Caco-2 (cell line): ENCODE measurements at regions of chr10 and their contacts with region 1.

Region 1: GRCh38 chr10:43420369-43421200 is 11.6 kb upstream of the HNRNPF start:
- DNase-seq: peak; percentile 97 to 98
- H3K4me3 ChIP-seq: peak overlapping the region; percentile 68
- H3K4me3 Mint-ChIP-seq: peak overlapping the region; percentile 96
- H3K27ac Mint-ChIP-seq: peak overlapping the region; percentile 99
- H3K4me1 ChIP-seq: peaks cover 9% of the 10 kb centered on the region; the same call in 1 of the 2 replicates
- H3K4me1 Mint-ChIP-seq: peaks cover 17% of the 10 kb centered on the region
- H3K27me3 ChIP-seq: no peaks in the 10 kb centered on the region
- H3K27me3 Mint-ChIP-seq: no peaks in the 10 kb centered on the region
- CTCF ChIP-seq: peak in 1 of 2 experiments; percentile 33

Region 2: GRCh38 chr10:43436400-43437140 is 16.0 kb after region 1 on chr10 and contains the start of gene ZNF487:
- CTCF ChIA-PET with region 1: interaction called, 3 read pairs
- POLR2A ChIA-PET with region 1: interaction called, 25 read pairs
- intact Hi-C with region 1: loop called (anchors 1 kb)
- DNase-seq: peak; percentile 94 to 98
- H3K4me3 ChIP-seq: peak within 1 kb of the TSS; percentile 87
- H3K4me3 Mint-ChIP-seq: peak within 1 kb of the TSS; percentile 97
- H3K27ac Mint-ChIP-seq: peak within 1 kb of the TSS; percentile 98
- H3K4me1 ChIP-seq: peaks cover 10% of the 10 kb centered on the region; the same call in 1 of the 2 replicates
- H3K4me1 Mint-ChIP-seq: no peaks in the 10 kb centered on the region
- H3K27me3 ChIP-seq: no peaks in the 10 kb centered on the region
- H3K27me3 Mint-ChIP-seq: no peaks in the 10 kb centered on the region
- CTCF ChIP-seq: peak in 1 of 2 experiments; percentile 62
- total RNA-seq, gene ZNF487: 5.0 and 6.5 TPM in 2 replicates

Region 3: DNA sequence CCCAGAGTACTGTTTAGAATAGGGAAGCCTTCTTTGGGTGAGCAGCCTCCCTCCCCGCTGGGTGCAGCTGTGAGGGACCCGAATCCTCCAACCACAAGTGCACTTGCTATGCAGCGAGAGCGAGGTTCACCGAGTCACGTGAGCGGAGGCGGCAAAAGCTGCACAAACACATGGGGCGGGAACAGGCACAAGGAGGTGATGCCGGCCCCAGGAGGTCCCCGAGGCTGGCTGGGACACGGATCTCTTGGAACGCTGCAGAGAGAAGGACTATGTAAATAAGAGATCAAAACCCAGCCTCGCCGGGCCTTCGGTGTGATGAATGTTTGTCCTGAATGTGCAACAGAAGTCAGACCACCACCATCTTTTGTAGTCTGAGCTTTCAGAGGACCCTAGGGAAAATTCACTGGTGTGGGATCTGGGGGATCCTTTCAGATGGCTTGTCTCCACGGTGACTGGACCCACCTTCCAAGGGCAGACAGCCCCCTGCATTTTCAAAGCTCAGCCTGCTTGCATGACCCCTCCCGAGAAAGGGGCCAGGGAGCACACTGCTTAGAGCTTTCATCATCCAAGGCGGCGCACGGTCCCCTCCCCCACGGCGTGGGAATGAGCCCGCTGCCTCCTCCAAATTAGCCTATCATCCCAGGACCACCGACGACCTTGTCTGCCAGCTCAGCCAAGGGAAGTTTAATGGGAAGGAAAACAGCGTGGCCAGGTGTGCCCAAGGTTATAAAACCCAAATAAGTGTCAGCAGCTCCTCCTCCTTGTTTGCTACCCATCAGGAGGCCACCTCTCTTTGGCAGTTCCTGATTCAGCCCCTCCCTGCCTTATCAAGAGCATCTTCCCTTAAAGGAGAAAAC is 636.6 kb after region 1 on chr10:
- CTCF ChIA-PET with region 1: no interaction called
- POLR2A ChIA-PET with region 1: no interaction called
- intact Hi-C with region 1: no loop called
- DNase-seq: no peak
- H3K4me3 ChIP-seq: no peak overlapping the region
- H3K4me3 Mint-ChIP-seq: no peak overlapping the region
- H3K27ac Mint-ChIP-seq: no peak overlapping the region
- H3K4me1 ChIP-seq: no peaks in the 10 kb centered on the region
- H3K4me1 Mint-ChIP-seq: no peaks in the 10 kb centered on the region
- H3K27me3 ChIP-seq: no peaks in the 10 kb centered on the region; the same call in 1 of the 2 replicates
- H3K27me3 Mint-ChIP-seq: peaks cover 5% of the 10 kb centered on the region
- CTCF ChIP-seq: no peak